Cardiac septum (tissue), 1 donor: ENCODE measurements at regions of chr3 and their contacts with region 1.

Region 1: GRCh38 chr3:28916713-28917499 is 364.0 kb upstream of the RBMS3 start:
- DNase-seq: peak; percentile 78

Region 2: GRCh38 chr3:28726840-28727239 is 190.1 kb before region 1 on chr3:
- intact Hi-C with region 1: no loop called
- DNase-seq: no peak

Region 3: GRCh38 chr3:28947061-28947460 is 30.2 kb after region 1 on chr3:
- intact Hi-C with region 1: no loop called
- DNase-seq: no peak

Region 4: DNA sequence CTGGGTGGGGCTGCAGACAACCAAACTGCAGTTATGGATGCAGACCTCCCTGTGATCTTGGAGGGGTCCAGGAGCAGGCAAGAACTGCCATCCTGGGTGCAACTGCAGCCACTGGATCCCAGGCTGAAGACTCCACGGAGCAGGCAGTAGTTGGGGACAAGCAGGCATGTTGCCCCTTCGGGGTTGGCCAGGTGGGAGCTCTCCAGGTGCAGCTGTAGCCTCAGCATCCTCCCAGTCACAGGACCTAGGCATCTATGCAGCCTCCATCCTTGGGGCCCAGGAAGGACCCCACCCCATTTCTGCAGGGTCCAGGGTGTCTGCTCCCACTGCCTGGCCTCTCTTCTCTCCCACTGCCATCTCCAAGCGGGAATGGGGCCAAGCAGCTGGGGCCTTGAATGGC is 41.8 kb after region 1 on chr3:
- intact Hi-C with region 1: no loop called
- DNase-seq: no peak

Region 5: GRCh38 chr3:29525254-29525881 is 608.5 kb after region 1 on chr3:
- intact Hi-C with region 1: loop called (anchors 10 kb)
- DNase-seq: no peak

Region 6: DNA sequence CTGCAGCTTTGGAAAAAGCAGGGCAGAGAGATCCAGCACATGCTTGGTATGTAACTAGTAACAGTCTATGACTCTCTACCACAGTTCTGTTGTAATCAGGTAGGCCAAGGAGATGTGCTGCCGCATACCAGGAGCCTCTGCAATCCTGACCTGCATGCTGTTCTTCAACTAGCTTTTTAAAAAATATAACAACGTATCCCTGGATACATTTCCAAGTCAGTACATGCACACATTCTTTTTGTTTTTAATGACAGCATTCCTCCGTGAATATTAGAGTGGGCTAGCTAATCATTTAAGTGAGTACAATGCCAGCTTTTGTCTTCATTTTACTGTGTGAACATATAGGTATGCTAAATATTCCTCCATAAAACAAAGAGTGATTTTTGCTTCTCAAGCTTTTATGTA is 801.8 kb after region 1 on chr3:
- intact Hi-C with region 1: loop called (anchors 10 kb)
- DNase-seq: no peak